Activated T-helper 1 cell treated with anti-CD3 and anti-CD28 coated beads, Interleukin-12 subunit alpha, Interleukin-12 subunit beta, Interleukin-2, Interleukin-4 antibody, amounts not matched to agents 30 ng/mL and 10 ng/mL and 1 ng/mL, durations not matched to agents 14 hours and 24 hours and 36 hours (primary cell): ENCODE measurements at regions of chr16 and their contacts with region 1.

Region 1: DNA sequence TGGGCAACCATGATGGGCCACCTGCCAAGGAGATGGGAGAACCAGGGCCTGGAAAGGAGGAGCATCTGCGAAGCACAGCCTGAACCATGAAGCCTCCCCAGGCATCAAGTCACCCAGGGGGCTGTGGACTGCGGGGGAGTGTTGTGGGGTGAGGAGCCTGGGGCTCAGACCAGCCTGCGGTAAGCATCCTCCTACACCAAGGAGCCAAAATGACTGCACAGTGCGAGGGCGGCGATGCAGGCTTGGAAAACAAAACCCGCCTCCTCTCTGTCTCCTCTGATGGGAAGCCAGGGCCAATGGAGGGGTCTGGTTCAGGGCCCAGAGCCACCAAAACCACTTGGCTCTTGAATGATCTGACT is 18.1 kb upstream of the MAF start:
- DNase-seq: peak; percentile 37
- H3K4me3 Mint-ChIP-seq: peak overlapping the region; percentile 46
- H3K27ac Mint-ChIP-seq: peak overlapping the region; percentile 91
- H3K4me1 Mint-ChIP-seq: peaks cover 75% of the 10 kb centered on the region
- H3K27me3 Mint-ChIP-seq: peaks cover 6% of the 10 kb centered on the region

Region 2: DNA sequence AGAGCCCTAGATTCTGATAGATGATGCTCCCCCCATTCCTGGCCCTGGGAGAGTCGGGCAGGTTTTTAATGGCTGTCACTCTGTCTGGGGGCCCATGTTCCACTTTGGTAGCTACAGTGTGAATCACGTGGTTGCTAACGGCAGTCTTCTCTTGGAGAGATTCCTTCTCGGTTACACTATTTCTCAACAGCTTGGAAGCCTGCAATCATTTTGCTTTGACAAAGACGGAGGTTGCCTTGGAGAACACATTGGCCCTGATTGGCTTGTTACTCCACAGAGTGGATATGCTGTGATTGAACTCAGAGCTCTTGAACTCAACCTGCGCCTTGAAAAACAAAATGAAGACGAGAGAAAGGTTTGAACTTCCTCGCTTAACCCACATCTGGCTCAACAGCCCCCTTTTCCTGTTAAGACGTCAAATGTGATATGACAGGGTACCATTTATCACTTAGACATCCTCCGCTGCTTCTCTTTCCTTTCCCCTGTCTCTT is 237.1 kb before region 1 on chr16:
- intact Hi-C with region 1: no loop called
- DNase-seq: no peak
- H3K4me3 Mint-ChIP-seq: no peak overlapping the region
- H3K27ac Mint-ChIP-seq: no peak overlapping the region
- H3K4me1 Mint-ChIP-seq: peaks cover 18% of the 10 kb centered on the region
- H3K27me3 Mint-ChIP-seq: peaks cover 17% of the 10 kb centered on the region

Region 3: DNA sequence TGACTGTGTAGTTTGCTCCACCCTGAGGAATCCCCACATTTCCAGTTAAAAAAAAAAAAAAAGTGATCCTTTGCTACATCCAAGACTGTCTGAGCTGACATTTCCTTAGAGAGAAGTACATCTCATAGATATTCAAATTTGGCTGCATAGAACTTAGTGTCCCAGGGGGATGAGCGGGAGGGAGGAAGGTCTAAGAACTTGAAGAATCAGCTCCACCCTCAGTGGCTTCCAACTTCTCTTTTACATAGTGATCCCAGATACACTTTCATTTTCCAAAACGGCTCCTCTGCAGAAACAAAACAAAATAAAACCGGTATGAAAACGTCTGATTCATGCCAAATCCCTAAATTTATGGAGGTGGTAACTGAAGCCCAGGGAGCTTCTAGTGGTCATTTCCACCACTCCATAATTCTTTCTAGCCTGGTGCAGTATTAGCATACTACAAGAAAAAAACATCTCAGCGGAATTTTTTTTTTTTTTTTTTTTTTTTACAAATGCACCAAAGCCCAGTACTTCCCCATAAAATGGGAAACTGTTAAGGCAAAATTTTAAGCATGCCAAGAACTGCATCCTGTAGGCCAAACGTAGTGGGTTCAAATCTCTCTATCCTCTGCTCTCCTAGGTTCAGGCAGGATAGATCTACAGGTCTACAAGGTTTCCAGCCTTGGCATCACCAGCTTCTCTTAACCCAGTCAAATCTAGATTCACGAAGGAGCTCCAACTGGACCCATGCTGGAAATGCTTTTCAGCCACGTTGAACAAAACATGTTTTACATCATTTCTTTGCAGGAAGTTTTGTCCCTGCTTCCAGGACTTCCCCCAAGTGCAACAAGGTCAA is 47.4 kb before region 1 on chr16:
- intact Hi-C with region 1: no loop called
- DNase-seq: no peak
- H3K4me3 Mint-ChIP-seq: no peak overlapping the region
- H3K27ac Mint-ChIP-seq: no peak overlapping the region
- H3K4me1 Mint-ChIP-seq: no peaks in the 10 kb centered on the region
- H3K27me3 Mint-ChIP-seq: peaks cover 24% of the 10 kb centered on the region

Region 4: DNA sequence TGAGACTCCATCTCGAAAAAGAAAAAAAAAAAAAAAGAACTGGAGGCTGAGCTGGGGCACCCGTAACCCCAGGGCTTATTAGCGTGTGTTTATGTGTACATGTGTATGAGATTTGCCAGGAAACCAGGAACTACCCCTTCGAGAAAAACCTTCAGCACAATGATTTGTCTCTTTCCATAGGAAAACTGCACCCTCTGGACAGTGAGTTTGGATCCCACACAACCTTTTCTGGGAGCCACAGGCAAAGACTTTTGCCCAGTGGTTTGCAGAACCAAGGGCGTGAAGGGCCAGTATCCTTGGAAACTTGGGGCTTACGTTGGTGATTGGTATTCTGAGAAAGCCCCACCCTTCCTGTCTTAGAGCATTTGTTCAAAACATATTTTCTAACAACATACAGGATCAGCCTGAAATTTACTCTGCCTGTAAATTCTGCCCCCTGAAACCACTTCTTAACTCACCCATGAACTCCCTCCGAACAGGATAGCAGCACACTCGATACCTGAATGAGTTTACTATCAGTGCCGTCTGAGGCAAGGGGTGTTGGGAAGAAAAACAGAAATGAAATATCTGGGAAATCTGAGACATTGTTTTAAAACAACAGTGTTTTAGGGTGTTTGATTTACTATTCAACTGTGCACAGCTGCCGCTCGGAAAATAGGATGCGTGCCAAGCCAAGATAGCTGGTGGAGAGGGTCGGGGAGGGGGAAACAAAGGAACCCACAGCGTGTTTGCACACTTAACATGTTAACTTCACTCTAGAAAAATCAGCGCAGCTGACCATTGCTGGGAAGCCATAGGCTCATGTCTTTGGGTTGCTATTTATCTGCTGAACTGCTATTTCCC is 22.1 kb after region 1 on chr16:
- intact Hi-C with region 1: loop called (anchors 1 kb)
- DNase-seq: peak; percentile 17
- H3K4me3 Mint-ChIP-seq: peak overlapping the region; percentile 13
- H3K27ac Mint-ChIP-seq: peak overlapping the region; percentile 49
- H3K4me1 Mint-ChIP-seq: peaks cover 55% of the 10 kb centered on the region
- H3K27me3 Mint-ChIP-seq: no peaks in the 10 kb centered on the region

Region 5: GRCh38 chr16:79677799-79678577 is 59.3 kb after region 1 on chr16:
- intact Hi-C with region 1: no loop called
- DNase-seq: no peak
- H3K4me3 Mint-ChIP-seq: no peak overlapping the region
- H3K27ac Mint-ChIP-seq: no peak overlapping the region
- H3K4me1 Mint-ChIP-seq: no peaks in the 10 kb centered on the region
- H3K27me3 Mint-ChIP-seq: peaks cover 2% of the 10 kb centered on the region

Region 6: DNA sequence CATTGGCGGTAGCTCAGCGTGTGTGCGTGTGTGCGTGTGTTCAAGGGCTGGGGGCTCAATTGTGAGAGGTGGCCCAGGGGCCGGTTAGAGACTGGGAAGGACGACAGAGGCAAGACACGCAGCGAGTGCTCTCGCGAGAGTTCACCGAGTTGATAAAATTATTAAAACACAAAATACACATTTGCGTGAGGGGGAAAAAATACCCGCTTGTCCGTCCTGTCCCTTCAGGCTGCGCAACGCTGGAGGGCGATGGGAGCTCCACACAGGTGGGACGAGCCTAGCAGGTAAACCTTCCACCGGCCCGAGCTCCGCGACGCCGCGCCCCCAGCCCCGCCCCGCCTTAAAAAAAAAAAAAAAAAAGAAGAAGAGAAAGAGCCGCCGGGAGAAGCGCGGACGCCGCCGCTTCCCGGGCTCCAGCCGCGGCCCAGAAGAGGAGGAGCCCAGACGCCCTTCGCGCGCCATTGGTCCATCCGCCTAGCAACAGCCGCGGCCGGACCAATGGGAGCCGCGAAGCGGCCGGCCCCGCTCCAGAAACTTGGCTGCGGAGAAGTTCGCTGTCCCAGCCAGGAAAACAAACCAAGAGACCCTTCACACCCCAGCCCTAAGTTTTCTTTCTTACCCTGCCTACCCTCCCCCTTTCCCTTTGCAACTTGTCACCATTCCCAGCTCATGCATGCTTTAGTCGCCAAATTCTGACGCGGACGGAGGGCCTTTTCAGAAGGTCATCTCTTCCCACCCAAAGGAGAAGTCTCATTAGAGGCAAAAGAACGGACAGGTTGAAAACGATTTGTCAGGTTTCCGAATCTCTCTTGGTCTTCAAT is 151.8 kb after region 1 on chr16:
- intact Hi-C with region 1: loop called (anchors 5 kb)
- DNase-seq: peak; percentile 71
- H3K4me3 Mint-ChIP-seq: peak overlapping the region; percentile 86
- H3K27ac Mint-ChIP-seq: peak overlapping the region; percentile 84
- H3K4me1 Mint-ChIP-seq: peaks cover 36% of the 10 kb centered on the region
- H3K27me3 Mint-ChIP-seq: no peaks in the 10 kb centered on the region

Region 7: DNA sequence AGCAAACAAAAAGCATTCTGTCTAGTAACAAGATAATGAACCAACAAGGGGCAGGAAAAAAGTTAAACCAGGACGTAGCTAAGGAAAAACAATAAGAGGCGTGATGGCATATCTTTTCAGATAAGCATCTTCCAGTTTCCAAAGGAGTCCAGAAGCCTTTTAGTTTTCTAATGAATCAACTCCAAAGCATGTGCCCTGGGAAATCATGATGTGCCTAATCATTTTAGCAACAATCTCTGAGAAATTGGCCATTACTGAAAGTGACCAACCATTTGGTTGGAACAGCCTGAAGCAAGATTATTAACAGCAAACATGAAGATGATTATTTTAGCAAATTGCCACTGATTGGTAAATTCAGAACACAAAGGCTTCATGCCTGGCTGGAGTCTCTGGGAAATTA is 422.7 kb after region 1 on chr16:
- intact Hi-C with region 1: no loop called
- DNase-seq: no peak
- H3K4me3 Mint-ChIP-seq: no peak overlapping the region
- H3K27ac Mint-ChIP-seq: no peak overlapping the region
- H3K4me1 Mint-ChIP-seq: no peaks in the 10 kb centered on the region
- H3K27me3 Mint-ChIP-seq: peaks cover 9% of the 10 kb centered on the region